Thyroid gland (tissue), 4 donors: ENCODE measurements at regions of chr2 and their contacts with region 1.

Region 1: GRCh38 chr2:199850718-199851500 is at the start of gene FTCDNL1:
- DNase-seq: peak; percentile 83 to 87
- H3K4me3 ChIP-seq: peak within 1 kb of the TSS; percentile 28 to 83 (median 52)
- H3K27ac ChIP-seq: peak within 1 kb of the TSS; percentile 69 to 84 (median 72)
- H3K4me1 ChIP-seq: peaks cover 0 to 12% of the 10 kb centered on the region in 2 donors
- H3K27me3 ChIP-seq: no peaks in the 10 kb centered on the region
- CTCF ChIP-seq: peak in 5 of 6 experiments; percentile 30 to 68 (median 43)
- POLR2A ChIP-seq: peak in 1 of 2 donors; percentile 81
- total RNA-seq, gene FTCDNL1: 6.2 to 20.9 (median 13.4) TPM

Region 2: GRCh38 chr2:199704358-199705238 is 146.3 kb before region 1 on chr2:
- intact Hi-C with region 1: loop called (anchors 5 kb)
- DNase-seq: peak; percentile 26 to 27
- H3K4me3 ChIP-seq: no peak overlapping the region
- H3K27ac ChIP-seq: no peak overlapping the region
- H3K4me1 ChIP-seq: no peaks in the 10 kb centered on the region
- H3K27me3 ChIP-seq: no peaks in the 10 kb centered on the region
- CTCF ChIP-seq: peak in 4 of 6 experiments; percentile 47 to 76 (median 60)
- POLR2A ChIP-seq: no peak

Region 3: DNA sequence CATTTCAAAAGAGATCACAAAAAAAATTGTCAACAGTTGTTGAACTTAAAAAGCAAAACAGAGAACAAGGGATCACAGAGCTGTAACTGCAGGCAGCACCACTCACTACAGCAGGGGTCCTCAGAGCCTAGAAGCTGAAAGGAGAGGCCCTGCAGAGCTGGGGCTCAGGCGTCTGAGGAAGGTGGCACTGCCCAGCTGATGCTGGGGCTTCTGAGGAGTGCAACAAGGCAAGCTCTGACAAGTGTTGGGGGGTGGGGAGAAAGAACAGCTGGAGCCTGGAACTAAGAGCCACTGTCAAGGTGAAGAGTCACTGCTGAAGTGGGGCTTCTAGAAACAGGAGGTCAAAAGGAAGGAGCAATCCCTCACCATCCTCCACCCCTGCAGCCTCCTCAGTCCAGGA is 46.1 kb before region 1 on chr2:
- intact Hi-C with region 1: loop called (anchors 10 kb)
- DNase-seq: peak; percentile 20 to 25
- H3K4me3 ChIP-seq: no peak overlapping the region
- H3K27ac ChIP-seq: peak overlapping the region; percentile 42 to 71 (median 58)
- H3K4me1 ChIP-seq: peaks cover 23 to 25% of the 10 kb centered on the region in 2 donors
- H3K27me3 ChIP-seq: no peaks in the 10 kb centered on the region
- CTCF ChIP-seq: no peak
- POLR2A ChIP-seq: no peak